ENCODE measurements at regions of chr11 and their contacts with region 1.

Region 1: DNA sequence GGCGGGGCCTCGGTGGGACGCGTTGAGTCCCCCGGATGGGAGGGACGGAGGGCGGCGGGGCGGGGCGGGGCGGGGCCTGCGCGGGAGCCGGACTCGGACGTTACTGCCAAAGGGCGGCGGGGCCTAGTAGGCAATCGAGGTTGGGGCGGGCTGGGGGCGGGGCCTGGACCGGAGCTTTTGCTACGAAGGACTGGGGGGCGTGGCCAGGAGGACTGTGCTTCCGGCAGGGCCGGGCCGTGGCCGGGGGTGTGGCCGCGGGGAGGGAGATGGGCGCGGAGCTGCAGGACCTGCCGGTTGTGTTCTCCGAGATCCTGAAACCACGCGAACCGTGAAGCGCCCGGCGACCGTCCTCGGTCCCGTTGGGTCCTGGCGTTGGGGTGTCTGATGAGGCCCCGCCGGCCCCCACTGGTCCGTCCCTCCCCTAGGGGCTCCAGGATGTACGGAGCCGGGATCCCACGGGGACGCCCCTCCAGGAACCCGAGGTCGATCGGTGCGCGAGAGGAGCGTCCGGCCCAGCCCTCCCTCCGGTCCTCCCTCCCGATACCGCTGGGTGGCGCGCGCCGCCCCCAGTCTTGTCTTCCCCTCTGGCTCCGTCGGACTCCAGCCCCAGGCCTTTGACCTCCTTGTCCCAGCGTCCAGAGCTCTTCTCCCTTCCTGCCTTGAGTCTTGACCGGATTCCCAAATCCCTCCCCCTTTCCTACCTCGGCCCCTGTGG is 648 bp upstream of the NUDT8 start:
- DNase-seq: peak; percentile 96
- H3K4me3 Mint-ChIP-seq: peak overlapping the region; percentile 79
- H3K27ac Mint-ChIP-seq: peak overlapping the region; percentile 52
- H3K4me1 Mint-ChIP-seq: no peaks in the 10 kb centered on the region
- H3K27me3 Mint-ChIP-seq: no peaks in the 10 kb centered on the region
- CTCF ChIP-seq: peak; percentile 70

Region 2: GRCh38 chr11:67572747-67573419 is 57.5 kb before region 1 on chr11:
- CTCF ChIA-PET with region 1: interaction called, 4 read pairs
- POLR2A ChIA-PET with region 1: interaction called, 3 read pairs
- intact Hi-C with region 1: loop called (anchors 1 kb)
- DNase-seq: peak; percentile 78
- H3K4me3 Mint-ChIP-seq: no peak overlapping the region
- H3K27ac Mint-ChIP-seq: no peak overlapping the region
- H3K4me1 Mint-ChIP-seq: peaks cover 7% of the 10 kb centered on the region
- H3K27me3 Mint-ChIP-seq: no peaks in the 10 kb centered on the region
- CTCF ChIP-seq: peak; percentile 87

Region 3: GRCh38 chr11:67613960-67614715 is 16.2 kb before region 1 on chr11:
- CTCF ChIA-PET with region 1: interaction called, 12 read pairs
- POLR2A ChIA-PET with region 1: interaction called, 7 read pairs
- intact Hi-C with region 1: no loop called
- DNase-seq: peak; percentile 54
- H3K4me3 Mint-ChIP-seq: peak overlapping the region; percentile 53
- H3K27ac Mint-ChIP-seq: peak overlapping the region; percentile 79
- H3K4me1 Mint-ChIP-seq: peaks cover 4% of the 10 kb centered on the region
- H3K27me3 Mint-ChIP-seq: peaks cover 19% of the 10 kb centered on the region
- CTCF ChIP-seq: peak; percentile 90

Region 4: GRCh38 chr11:67656278-67656922 is 26.0 kb after region 1 on chr11:
- CTCF ChIA-PET with region 1: interaction called, 50 read pairs
- POLR2A ChIA-PET with region 1: interaction called, 20 read pairs
- intact Hi-C with region 1: loop called (anchors 2 kb)
- DNase-seq: peak; percentile 39
- H3K4me3 Mint-ChIP-seq: no peak overlapping the region
- H3K27ac Mint-ChIP-seq: peak overlapping the region; percentile 64
- H3K4me1 Mint-ChIP-seq: no peaks in the 10 kb centered on the region
- H3K27me3 Mint-ChIP-seq: no peaks in the 10 kb centered on the region
- CTCF ChIP-seq: no peak

Region 5: GRCh38 chr11:67705264-67705663 is 74.9 kb after region 1 on chr11:
- CTCF ChIA-PET with region 1: no interaction called
- POLR2A ChIA-PET with region 1: interaction called, 7 read pairs
- intact Hi-C with region 1: loop called (anchors 5 kb)
- DNase-seq: no peak
- H3K4me3 Mint-ChIP-seq: no peak overlapping the region
- H3K27ac Mint-ChIP-seq: no peak overlapping the region
- H3K4me1 Mint-ChIP-seq: peaks cover 29% of the 10 kb centered on the region
- H3K27me3 Mint-ChIP-seq: no peaks in the 10 kb centered on the region
- CTCF ChIP-seq: no peak

Region 6: DNA sequence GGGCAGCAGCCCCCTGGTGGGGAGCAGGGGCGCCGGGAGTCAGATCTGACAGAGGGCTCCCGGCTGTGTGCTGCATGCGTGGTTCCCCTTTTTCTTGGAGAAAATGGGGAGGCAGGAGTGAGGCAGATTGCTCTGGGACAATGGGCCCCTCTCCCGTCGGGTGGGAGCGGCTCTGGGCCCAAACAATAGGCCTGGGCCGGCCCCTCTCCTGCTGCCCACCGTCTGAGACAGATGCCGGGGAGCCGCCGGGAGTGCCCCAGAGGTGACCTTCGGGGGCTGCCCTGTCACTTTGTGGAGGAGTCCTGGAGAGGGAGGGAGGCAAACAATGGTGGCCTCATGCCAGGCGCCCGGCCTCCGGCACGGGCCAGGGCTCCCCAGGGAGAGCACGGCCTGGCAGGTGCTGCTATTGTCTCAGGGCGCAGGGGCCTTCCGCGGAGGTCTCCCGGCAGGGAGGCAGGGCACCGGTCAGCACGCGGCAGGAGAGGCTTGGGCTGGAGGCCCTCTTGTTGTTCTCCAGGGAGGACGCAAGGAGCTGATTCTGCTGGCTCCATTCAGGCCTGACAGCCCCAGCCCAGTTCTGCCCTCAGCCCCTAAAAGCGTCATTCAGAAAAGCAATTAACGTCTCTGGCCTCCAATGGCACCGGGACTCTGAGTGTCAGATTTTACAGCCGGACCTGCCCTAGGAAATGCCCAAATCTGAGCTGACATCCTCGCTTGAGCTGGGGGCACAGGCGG is 1570.1 kb after region 1 on chr11:
- CTCF ChIA-PET with region 1: no interaction called
- POLR2A ChIA-PET with region 1: no interaction called
- intact Hi-C with region 1: no loop called
- DNase-seq: no peak
- H3K4me3 Mint-ChIP-seq: no peak overlapping the region
- H3K27ac Mint-ChIP-seq: no peak overlapping the region
- H3K4me1 Mint-ChIP-seq: no peaks in the 10 kb centered on the region
- H3K27me3 Mint-ChIP-seq: peaks cover 20% of the 10 kb centered on the region
- CTCF ChIP-seq: no peak

Measured in MCF 10A (cell line).